Dorsolateral prefrontal cortex (tissue), 120 donors: ENCODE measurements at regions of chr2 and their contacts with region 1.

Region 1: GRCh38 chr2:102755284-102755683 is 6.5 kb upstream of the TMEM182 start:
- DNase-seq: no peak
- H3K4me3 ChIP-seq: no peak overlapping the region
- H3K27ac ChIP-seq: no peak overlapping the region
- H3K27me3 ChIP-seq: no peaks in the 10 kb centered on the region
- CTCF ChIP-seq: no peak

Region 2: DNA sequence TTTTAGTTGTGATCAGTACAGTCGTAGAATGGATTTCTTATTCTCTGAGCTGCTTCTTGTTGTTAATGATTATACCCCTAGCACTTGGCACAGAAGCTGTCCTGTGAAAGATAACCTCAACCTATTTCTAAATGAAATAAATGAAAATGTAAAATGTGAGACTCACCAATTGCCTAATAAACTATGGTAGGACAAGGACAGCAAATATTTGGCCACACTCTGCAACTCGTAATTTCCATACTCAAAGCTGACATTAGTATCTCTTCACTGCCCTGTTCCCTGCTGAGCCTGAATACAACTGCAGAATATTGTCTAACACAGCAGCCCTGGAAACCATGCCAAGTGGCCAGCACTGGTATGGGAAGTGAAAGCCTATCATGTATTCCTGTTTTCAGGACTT is 41.1 kb after region 1 on chr2:
- intact Hi-C with region 1: loop called in 1 of 2 experiments (anchors 5 kb)
- DNase-seq: peak in 1 of 10 donors; percentile 49
- H3K4me3 ChIP-seq: no peak overlapping the region
- H3K27ac ChIP-seq: peak overlapping the region in 1 of 59 donors; percentile 74
- H3K27me3 ChIP-seq: no peaks in the 10 kb centered on the region
- CTCF ChIP-seq: no peak